ENCODE measurements at regions of chr5 and their contacts with region 1.

Region 1: DNA sequence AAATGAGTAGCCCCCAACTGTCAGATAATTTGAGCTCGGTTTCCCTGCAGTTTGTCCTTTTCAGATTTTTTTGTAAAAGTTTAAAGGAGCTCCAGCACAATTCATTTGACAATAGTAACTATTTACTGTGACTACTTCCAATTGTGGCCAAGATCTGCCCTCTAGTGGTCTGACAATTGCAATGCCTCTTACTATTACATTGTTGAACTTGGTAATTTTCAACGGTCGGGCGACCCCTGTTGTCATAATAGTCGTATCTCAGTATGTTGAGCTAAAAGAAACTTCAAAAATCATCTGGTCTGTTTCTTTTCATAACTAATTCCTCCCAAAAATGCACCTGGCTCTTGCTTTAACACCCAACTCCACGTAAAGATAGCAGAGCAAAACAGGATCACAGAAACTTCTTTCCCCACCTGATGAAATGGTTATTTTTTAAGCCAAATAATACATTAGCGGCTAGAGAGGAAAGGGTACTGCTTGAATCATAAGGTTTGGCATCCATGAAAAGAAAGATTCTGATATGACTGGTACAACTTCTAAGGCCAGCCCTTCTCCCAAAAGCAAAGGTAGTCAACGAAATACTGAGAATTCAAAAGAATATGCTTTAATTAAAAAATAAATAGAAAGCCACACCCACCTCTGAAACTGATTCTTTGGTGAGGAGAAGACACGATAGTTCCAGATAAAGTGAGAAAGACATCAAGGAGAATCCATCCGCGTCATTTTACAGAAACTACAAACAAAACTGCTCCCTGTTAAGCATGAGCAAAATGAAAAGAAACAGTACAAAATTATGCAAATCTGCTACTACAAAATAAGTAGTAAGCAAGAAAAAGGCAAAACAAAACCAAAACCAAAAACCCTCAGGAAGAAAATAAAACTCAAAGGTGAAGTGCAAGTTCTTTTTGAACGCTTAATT is 76.9 kb upstream of the HTR4 start:
- DNase-seq: peak; percentile 89 to 95 (median 92)
- H3K4me3 ChIP-seq: peak overlapping the region in 1 of 7 experiments; percentile 6
- H3K27ac ChIP-seq: no peak overlapping the region
- H3K4me1 ChIP-seq: peaks cover 0 to 8% (median 1%) of the 10 kb centered on the region in 4 experiments
- H3K27me3 ChIP-seq: no peaks in the 10 kb centered on the region

Region 2: GRCh38 chr5:148224131-148224742 is 507.0 kb before region 1 on chr5:
- CTCF ChIA-PET with region 1: no interaction called
- POLR2A ChIA-PET with region 1: no interaction called
- DNase-seq: no peak
- H3K4me3 ChIP-seq: no peak overlapping the region
- H3K27ac ChIP-seq: no peak overlapping the region
- H3K4me1 ChIP-seq: no peaks in the 10 kb centered on the region
- H3K27me3 ChIP-seq: peaks cover 0 to 2% (median 0%) of the 10 kb centered on the region in 5 experiments

Region 3: GRCh38 chr5:148437249-148437648 is 294.0 kb before region 1 on chr5:
- CTCF ChIA-PET with region 1: interaction called, 251 read pairs
- POLR2A ChIA-PET with region 1: no interaction called
- DNase-seq: peak in 2 of 3 donors; percentile 19 to 26
- H3K4me3 ChIP-seq: no peak overlapping the region
- H3K27ac ChIP-seq: peak overlapping the region in 1 of 2 experiments; percentile 30
- H3K4me1 ChIP-seq: no peaks in the 10 kb centered on the region
- H3K27me3 ChIP-seq: no peaks in the 10 kb centered on the region

Region 4: GRCh38 chr5:148452499-148453193 is 278.6 kb before region 1 on chr5:
- CTCF ChIA-PET with region 1: interaction called, 14 read pairs
- POLR2A ChIA-PET with region 1: no interaction called
- DNase-seq: no peak
- H3K4me3 ChIP-seq: no peak overlapping the region
- H3K27ac ChIP-seq: no peak overlapping the region
- H3K4me1 ChIP-seq: no peaks in the 10 kb centered on the region
- H3K27me3 ChIP-seq: peaks cover 0 to 4% (median 0%) of the 10 kb centered on the region in 5 experiments

Region 5: DNA sequence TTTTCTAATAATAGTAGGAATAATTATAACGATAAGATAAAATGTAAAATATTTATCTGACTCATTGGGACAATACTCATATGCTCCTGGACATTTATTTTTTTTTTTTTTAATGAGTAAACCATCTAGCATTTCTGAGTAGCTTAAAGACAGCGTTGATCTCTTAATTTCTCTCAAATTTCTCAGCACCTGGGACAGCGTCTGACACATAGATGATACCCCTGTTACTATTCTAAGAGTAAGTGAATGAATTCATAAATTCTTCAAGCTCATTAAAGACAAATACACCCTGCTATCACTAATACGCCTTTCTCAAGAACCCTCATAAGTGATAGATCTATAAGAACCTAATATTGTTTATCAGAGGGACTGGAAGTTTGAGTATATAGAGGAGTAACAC is 64.8 kb before region 1 on chr5:
- CTCF ChIA-PET with region 1: no interaction called
- POLR2A ChIA-PET with region 1: no interaction called
- DNase-seq: no peak
- H3K4me3 ChIP-seq: no peak overlapping the region
- H3K27ac ChIP-seq: no peak overlapping the region
- H3K4me1 ChIP-seq: no peaks in the 10 kb centered on the region
- H3K27me3 ChIP-seq: no peaks in the 10 kb centered on the region

Region 6: GRCh38 chr5:148768806-148769415 is 37.7 kb after region 1 on chr5:
- CTCF ChIA-PET with region 1: no interaction called
- POLR2A ChIA-PET with region 1: no interaction called
- DNase-seq: no peak
- H3K4me3 ChIP-seq: no peak overlapping the region
- H3K27ac ChIP-seq: no peak overlapping the region
- H3K4me1 ChIP-seq: peaks cover 0 to 30% (median 7%) of the 10 kb centered on the region in 4 experiments
- H3K27me3 ChIP-seq: no peaks in the 10 kb centered on the region

Region 7: DNA sequence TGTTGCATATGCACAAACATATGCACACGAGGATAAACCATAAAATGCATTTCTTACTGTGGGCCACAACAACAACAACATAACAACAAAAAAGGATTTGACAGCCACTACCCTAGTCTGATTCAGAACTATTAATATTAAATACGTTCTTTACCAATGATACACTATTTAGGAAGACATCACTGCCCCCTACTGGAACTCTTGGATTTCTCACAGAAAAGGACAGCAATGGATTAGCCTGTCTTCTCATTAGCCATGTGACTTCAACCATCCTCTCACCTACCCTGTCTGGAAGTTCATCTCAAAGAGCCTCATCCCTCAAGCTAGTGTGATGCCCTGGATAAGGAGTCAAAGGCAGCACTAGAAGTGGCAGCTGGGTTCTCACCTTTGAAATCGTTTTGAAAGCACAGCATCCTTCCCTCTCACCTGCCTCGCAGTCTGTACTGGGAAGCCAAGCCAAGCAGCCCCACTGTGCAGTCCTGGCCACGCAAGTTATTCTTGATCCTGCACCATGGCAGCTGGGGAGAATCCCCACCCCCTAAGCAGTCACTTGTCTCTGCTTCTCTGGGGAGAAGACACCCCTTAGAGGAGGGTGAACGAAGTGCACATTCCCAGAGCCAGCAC is 267.1 kb after region 1 on chr5:
- CTCF ChIA-PET with region 1: interaction called, 96 read pairs
- POLR2A ChIA-PET with region 1: no interaction called
- DNase-seq: peak; percentile 59 to 74 (median 70)
- H3K4me3 ChIP-seq: no peak overlapping the region
- H3K27ac ChIP-seq: no peak overlapping the region
- H3K4me1 ChIP-seq: no peaks in the 10 kb centered on the region
- H3K27me3 ChIP-seq: no peaks in the 10 kb centered on the region

Region 8: DNA sequence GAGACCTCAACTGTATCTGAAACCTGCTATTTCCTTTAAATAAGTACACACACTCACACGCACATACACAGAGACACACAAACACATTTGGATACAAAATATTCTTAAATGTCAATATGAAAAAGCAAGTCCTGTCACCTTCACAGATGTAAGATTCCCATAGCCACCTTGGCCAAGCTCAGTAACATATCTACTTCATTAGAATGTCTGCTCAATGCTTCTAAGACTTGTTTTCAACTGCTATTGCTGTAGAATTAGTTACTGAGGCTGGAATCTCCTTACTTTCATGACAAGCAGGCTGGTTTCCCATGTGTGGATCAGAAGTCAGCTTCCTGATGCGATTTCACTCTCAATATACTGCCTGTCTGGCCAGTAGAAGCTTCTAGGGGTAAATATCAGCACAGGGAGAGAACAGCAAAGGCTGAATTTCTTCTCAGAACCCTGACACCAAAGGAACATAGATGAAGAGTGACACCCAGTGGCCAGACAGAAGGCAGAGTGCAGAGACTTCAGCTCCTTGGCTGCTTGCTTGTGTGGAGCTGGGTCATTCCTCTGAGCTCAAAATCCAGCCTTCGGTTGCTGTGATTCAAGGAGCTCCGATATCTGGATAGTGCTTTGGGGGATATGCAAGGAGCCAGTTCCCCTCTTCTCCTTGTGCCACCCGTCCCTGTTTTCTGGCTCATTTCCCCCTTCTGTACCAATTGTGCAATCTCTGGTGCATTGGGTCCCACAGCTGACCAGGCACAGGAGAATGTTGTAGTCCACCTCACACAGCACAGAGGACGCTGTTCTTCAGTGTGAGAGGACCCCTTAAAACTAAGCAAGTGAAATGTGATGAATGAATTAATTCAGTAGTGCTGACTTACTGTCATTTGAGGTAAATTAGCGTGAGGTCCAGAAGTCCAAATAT is 383.5 kb after region 1 on chr5:
- CTCF ChIA-PET with region 1: interaction called, 107 read pairs
- POLR2A ChIA-PET with region 1: no interaction called
- DNase-seq: peak; percentile 77 to 88 (median 85)
- H3K4me3 ChIP-seq: no peak overlapping the region
- H3K27ac ChIP-seq: no peak overlapping the region
- H3K4me1 ChIP-seq: peaks cover 0 to 8% (median 3%) of the 10 kb centered on the region in 4 experiments
- H3K27me3 ChIP-seq: no peaks in the 10 kb centered on the region

Measured in common myeloid progenitor, CD34-positive (primary cell).